PC-9 (cell line): ENCODE measurements at regions of chr16 and their contacts with region 1.

Region 1: DNA sequence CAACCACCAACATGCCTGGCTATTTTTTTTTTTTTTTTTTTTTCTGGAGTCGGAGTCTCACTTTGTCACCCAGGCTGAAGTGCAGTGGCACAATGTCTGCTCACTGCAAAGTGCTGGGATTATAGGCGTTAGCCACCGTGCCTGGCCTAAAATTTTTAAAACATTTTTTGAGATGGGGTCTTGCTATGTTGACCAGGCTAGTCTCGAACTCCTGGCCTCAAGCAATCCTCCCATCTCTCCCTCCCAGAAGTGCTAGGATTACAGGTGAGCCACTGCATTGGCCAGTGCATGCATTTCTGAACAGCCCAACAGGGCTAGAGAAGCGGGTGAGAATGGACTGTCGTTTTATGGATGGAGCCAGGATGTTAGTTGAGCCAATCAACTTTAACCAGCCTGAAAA is 72.4 kb downstream of the ERCC4 start:
- DNase-seq: no peak
- H3K4me3 ChIP-seq: no peak overlapping the region
- H3K27ac ChIP-seq: no peak overlapping the region
- H3K4me1 ChIP-seq: no peaks in the 10 kb centered on the region
- H3K27me3 ChIP-seq: no peaks in the 10 kb centered on the region
- CTCF ChIP-seq: no peak

Region 2: DNA sequence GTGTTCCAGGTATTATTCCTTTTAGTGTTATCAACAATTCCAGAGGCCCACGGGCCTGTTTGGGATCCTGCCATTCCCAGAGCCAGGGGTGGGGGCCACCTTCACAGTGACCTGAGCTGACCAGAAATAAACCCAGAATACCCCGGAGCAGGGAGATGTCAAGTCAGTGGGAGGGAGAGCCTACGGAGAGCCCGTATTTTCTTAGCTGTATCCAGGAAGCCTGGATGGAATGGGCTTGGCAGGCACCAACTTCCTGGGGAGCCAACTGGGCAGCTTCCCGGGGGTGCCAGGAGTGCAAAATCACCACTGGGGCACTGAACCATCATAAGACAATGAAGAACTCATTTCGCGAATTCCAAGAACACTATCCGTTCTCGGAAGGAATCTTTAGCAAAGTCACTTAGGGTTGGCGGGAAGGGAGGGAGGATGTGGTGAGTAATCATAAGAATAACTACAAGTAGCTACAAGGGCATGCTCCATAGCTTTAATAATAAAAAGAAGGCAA is 65.6 kb after region 1 on chr16:
- CTCF ChIA-PET with region 1: no interaction called
- POLR2A ChIA-PET with region 1: interaction called, 20 read pairs
- intact Hi-C with region 1: no loop called
- DNase-seq: no peak
- H3K4me3 ChIP-seq: no peak overlapping the region
- H3K27ac ChIP-seq: no peak overlapping the region
- H3K4me1 ChIP-seq: no peaks in the 10 kb centered on the region
- H3K27me3 ChIP-seq: no peaks in the 10 kb centered on the region
- CTCF ChIP-seq: no peak

Region 3: DNA sequence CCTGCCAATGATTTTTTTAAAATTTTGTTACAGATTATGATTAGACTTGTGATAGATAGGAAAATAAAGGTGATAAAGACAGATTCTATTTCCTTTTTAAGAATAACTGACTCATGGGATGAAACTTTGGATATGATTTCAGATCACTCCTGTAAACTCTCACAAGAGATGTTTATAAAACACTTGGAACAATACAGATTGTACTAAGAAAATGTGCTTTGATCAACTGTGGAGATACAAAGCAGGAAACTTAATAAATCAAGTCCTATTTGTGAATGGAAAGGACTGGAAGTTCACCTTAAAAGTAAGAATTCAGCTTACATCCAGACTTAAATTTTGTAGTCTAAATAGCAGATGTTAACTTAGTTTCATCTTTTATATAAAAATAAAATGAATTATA is 100.3 kb after region 1 on chr16:
- CTCF ChIA-PET with region 1: no interaction called
- POLR2A ChIA-PET with region 1: no interaction called
- intact Hi-C with region 1: no loop called
- DNase-seq: no peak
- H3K4me3 ChIP-seq: no peak overlapping the region
- H3K27ac ChIP-seq: no peak overlapping the region; the same call in 1 of the 2 replicates
- H3K4me1 ChIP-seq: peaks cover 68% of the 10 kb centered on the region
- H3K27me3 ChIP-seq: no peaks in the 10 kb centered on the region
- CTCF ChIP-seq: no peak